Aorta (tissue), 5 donors: ENCODE measurements at regions of chr10 and their contacts with region 1.

Region 1: DNA sequence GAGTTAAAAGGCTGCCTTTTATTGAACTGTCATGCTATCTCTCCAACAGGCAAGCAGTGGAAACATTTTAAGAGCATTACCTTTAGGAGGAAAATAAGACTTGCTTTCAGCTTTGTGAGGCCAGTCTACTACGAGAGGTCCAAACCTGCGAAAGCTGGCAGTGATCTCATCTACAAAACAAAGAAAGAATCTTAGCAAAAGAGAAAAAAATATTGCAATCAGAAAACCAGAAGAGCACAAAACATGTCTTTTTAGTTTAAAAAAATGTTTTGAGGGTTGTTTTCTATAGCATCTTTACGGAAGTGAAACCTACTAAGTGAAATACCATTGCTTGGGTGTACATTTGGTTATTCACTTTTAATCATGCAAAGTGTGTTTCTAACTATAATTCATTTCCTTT is 147.9 kb downstream of the CPEB3 start:
- DNase-seq: no peak
- ATAC-seq: no peak
- H3K4me3 ChIP-seq: no peak overlapping the region
- H3K27ac ChIP-seq: peak overlapping the region in 1 of 2 donors; percentile 43
- H3K4me1 ChIP-seq: peaks cover 6 to 8% of the 10 kb centered on the region in 2 donors
- H3K27me3 ChIP-seq: no peaks in the 10 kb centered on the region

Region 2: GRCh38 chr10:92208736-92209327 is 65.9 kb after region 1 on chr10:
- intact Hi-C with region 1: loop called in 1 of 2 experiments (anchors 10 kb)
- DNase-seq: no peak
- ATAC-seq: no peak
- H3K4me3 ChIP-seq: no peak overlapping the region
- H3K27ac ChIP-seq: peak overlapping the region in 1 of 2 donors; percentile 1
- H3K4me1 ChIP-seq: no peaks in the 10 kb centered on the region
- H3K27me3 ChIP-seq: no peaks in the 10 kb centered on the region

Region 3: GRCh38 chr10:92464364-92464763 is 321.4 kb after region 1 on chr10:
- intact Hi-C with region 1: no loop called
- DNase-seq: no peak
- ATAC-seq: no peak
- H3K4me3 ChIP-seq: no peak overlapping the region
- H3K27ac ChIP-seq: no peak overlapping the region
- H3K4me1 ChIP-seq: no peaks in the 10 kb centered on the region
- H3K27me3 ChIP-seq: no peaks in the 10 kb centered on the region